Left ventricle myocardium inferior (tissue), 1 donor: ENCODE measurements at regions of chr2 and their contacts with region 1.

Region 1: DNA sequence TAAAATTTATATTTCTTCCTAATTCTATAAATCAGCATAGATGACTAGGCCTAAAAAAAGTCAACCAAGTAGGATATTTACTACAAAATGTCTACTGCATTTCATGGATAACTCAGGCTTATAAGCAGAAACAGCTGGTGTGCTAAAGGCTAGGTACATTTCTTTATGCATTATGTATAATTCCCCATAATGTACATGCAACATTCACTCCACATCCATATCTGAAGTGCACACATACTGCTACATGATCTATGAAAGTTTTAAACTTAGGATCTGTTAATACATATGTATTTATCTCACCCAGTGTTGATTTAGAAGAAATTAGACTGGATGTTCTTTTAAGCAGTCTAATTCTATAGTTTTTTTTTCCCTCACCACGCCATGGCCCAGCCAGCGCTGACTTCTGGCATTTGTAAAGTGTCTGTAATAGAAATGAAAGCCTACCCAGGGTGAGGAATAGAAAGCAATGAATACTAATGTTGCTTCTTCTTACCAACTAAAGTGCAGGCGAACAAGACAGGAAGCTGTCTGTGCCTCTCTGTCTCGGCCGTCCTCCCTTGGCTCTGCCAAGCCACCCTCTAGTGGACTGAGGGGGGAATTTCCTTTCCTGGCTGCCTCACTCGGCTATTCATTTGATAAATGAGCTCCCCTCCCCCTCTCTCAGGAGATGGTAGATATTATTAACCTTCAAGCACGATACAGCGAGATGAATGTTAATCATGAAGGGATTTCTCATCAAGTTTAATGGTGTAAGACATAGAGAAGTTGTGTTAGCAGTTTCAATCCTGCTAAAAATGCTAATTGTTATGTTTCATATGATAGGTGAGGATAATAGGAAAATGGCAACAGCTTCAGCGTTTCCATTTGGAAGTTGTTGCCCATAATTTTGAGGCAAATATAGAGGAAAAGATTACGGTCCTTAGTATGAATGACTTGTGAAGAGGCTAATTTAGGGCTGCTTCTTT is 384.5 kb downstream of the MTX2 start:
- DNase-seq: peak; percentile 25
- H3K4me3 ChIP-seq: no peak overlapping the region
- H3K27ac ChIP-seq: no peak overlapping the region
- H3K4me1 ChIP-seq: peaks cover 5% of the 10 kb centered on the region
- H3K27me3 ChIP-seq: peaks cover 64% of the 10 kb centered on the region
- CTCF ChIP-seq: peak; percentile 78

Region 2: GRCh38 chr2:176140513-176141317 is 513.0 kb before region 1 on chr2:
- intact Hi-C with region 1: loop called (anchors 5 kb)
- DNase-seq: peak; percentile 59
- H3K4me3 ChIP-seq: peak overlapping the region; percentile 63
- H3K27ac ChIP-seq: no peak overlapping the region
- H3K4me1 ChIP-seq: peaks cover 27% of the 10 kb centered on the region
- H3K27me3 ChIP-seq: peaks cover 100% of the 10 kb centered on the region
- CTCF ChIP-seq: peak; percentile 96

Region 3: DNA sequence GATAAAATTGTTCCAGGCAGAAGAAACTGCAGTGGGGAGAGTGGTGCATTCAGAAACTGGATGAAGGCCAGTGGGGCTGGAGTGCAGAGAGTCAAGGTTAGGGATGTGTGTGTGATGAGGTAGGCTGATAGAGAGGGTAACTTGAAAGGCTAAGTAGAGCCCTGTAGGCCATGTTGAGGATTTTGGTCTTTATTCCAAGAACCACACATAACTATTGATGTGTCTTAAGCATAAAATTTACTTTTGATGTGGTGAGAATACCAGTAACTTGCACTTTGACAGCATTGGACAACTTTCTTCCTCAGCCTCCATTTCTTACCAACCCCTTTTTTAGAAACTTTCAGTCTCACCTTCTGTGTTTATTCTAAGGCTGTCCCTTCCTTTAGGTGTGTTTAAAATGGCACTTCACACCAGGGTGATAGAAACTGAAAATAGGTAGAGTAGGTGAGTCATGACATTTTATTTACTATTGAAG is 361.9 kb before region 1 on chr2:
- intact Hi-C with region 1: loop called (anchors 5 kb)
- DNase-seq: no peak
- H3K4me3 ChIP-seq: no peak overlapping the region
- H3K27ac ChIP-seq: no peak overlapping the region
- H3K4me1 ChIP-seq: peaks cover 56% of the 10 kb centered on the region
- H3K27me3 ChIP-seq: no peaks in the 10 kb centered on the region
- CTCF ChIP-seq: no peak

Region 4: DNA sequence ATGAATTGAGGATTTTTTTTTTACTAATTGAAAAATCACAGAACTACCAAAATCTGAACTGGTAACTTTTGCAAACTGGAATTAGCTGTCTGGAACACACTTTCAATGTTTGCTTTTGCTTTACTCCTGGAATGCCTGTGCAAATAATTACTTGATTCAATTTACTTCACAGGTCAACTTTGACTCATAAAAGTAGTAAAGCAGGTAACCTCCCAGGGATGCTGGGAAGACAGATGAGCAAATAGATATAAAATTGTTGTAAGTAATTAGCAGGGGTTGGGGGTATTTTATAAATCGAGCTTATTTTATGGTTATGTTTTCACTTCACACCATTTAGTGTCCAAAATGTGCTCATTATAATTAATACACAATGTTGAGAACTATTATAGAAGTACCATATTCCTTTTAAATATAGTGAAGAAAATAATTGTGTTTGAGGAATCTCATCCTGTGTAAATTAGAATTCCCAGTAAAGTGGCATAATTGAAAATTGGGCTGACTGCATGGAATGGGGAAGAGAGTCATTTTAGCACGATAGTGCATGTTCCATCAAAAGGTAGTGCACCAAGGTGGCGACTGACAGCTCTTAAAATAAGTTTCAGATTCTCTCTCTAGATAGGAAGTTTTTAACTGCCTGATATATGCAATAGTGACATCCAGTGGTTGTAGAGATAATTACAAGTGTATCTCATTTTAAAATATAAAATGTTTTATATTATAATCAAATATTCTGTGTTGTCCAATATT is 160.7 kb after region 1 on chr2:
- intact Hi-C with region 1: loop called (anchors 10 kb)
- DNase-seq: no peak
- H3K4me3 ChIP-seq: no peak overlapping the region
- H3K27ac ChIP-seq: no peak overlapping the region
- H3K4me1 ChIP-seq: no peaks in the 10 kb centered on the region
- H3K27me3 ChIP-seq: peaks cover 24% of the 10 kb centered on the region
- CTCF ChIP-seq: peak; percentile 73

Region 5: DNA sequence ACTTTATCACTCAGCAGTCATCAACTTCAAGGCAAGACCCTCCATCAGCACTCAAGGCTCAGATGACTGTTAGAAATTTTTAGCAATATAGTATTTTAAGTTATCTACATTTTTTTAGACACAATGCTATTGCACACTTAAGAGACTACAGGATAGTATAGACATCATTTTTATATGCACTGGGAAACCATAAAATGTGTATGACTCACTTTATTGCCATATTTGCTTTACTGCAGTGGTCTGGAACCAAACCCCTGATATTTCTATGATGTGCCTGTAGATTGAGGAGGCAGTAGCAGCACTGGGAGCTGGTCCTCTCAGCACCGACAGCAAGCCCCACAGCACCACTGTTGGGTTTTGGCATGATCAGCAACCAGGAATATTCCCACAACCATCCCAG is 294.0 kb after region 1 on chr2:
- intact Hi-C with region 1: no loop called
- DNase-seq: no peak
- H3K4me3 ChIP-seq: no peak overlapping the region
- H3K27ac ChIP-seq: no peak overlapping the region
- H3K4me1 ChIP-seq: no peaks in the 10 kb centered on the region
- H3K27me3 ChIP-seq: peaks cover 9% of the 10 kb centered on the region
- CTCF ChIP-seq: no peak

Region 6: DNA sequence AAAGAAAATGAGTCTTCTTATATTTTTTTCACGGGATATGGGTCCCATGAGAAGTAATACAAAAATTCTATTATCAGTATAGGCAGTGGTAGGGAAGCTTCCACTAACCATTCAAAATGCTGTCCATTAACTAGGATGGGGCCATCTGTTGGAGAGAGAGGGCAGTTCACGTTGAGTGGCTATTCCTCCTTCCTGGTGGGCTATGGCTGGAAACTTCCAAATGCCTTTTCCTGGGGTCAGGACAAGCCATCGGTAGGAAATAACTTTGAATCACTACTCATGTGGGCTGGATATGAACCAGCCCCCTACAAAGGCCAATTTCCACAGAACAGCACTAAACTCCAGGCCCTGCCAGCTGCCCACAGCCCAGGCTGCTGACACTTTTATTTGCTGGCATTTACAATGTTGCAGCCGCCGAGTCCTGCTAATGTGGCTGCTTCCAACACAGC is 402.7 kb after region 1 on chr2:
- intact Hi-C with region 1: no loop called
- DNase-seq: no peak
- H3K4me3 ChIP-seq: no peak overlapping the region
- H3K27ac ChIP-seq: no peak overlapping the region
- H3K4me1 ChIP-seq: no peaks in the 10 kb centered on the region
- H3K27me3 ChIP-seq: peaks cover 6% of the 10 kb centered on the region
- CTCF ChIP-seq: no peak

Region 7: DNA sequence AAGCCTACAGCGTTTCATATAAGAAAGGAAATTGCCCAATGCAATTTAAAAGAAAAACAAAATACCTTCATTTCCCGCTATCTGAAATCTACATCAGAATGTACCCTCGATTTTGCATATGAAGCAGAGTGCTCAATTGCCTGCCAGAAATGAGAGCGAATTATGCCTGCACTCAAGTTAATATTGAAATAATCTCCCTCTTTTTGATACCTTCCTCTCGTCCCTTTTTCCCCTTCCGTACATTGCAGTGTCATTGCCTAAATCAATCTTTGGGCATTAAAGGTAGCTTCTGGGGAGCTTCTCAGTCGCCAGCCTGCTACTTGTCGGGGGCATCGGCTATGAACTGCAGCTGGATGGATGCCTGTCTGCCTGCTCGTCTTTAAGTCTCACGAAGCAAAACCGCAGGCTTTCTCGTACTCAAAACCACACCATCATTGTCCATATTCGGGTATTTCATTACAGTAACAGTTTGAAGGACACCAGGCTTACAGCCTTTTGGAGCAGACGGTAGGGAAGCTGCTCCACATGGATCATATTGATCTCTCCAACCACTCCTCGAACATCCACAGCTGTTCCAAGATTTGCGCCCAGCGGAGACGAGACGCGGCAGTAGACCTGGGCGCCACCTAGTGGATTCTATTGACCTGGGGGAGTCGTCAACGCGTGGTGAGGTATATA is 494.9 kb after region 1 on chr2:
- intact Hi-C with region 1: loop called (anchors 5 kb)
- DNase-seq: peak; percentile 65
- H3K4me3 ChIP-seq: peak overlapping the region; percentile 62
- H3K27ac ChIP-seq: no peak overlapping the region
- H3K4me1 ChIP-seq: peaks cover 13% of the 10 kb centered on the region
- H3K27me3 ChIP-seq: peaks cover 70% of the 10 kb centered on the region
- CTCF ChIP-seq: peak; percentile 85